CD8-positive, alpha-beta T cell (primary cell): ENCODE measurements at regions of chr7 and their contacts with region 1.

Region 1: DNA sequence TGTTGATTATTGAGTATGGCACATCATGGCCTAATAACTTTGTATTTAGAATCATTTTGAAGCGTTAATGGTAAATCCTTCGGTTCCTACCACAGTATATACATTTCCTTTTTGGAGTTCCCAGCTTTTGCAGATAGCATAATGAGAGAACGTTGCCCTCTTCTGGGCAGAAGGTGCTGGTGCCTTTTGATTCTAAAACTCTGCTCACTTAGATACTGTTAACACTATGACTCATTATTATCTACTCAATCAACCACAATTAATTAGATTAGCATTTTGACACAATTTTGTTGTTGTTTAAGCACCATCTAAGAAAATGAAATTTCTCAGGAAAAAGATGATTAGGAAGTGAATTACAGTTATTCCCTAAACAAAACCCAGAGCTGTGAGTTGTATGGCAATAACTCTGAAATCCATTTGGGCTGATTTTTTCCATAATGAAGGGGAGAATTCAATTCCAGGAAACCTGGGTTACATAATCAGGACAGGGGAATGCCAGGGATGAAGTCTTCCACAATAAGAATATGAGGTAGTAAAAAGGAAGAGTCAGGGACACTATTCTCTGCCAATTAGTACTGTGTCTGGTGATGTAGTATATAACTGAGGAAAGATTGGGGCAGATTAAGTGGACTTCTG is 11.5 kb upstream of the DLD start:
- DNase-seq: peak in 3 of 9 experiments; percentile 36 to 72 (median 66)
- ATAC-seq: peak; percentile 73
- H3K4me3 ChIP-seq: no peak overlapping the region
- H3K4me3 Mint-ChIP-seq: no peak overlapping the region
- H3K27ac ChIP-seq: no peak overlapping the region
- H3K27ac Mint-ChIP-seq: no peak overlapping the region
- H3K4me1 ChIP-seq: peaks cover 7% of the 10 kb centered on the region
- H3K4me1 Mint-ChIP-seq: peaks cover 18% of the 10 kb centered on the region
- H3K27me3 ChIP-seq: no peaks in the 10 kb centered on the region
- H3K27me3 Mint-ChIP-seq: peaks cover 12% of the 10 kb centered on the region
- CTCF ChIP-seq: peak; percentile 80

Region 2: GRCh38 chr7:106793015-106793975 is 1086.2 kb before region 1 on chr7:
- CTCF ChIA-PET with region 1: no interaction called
- POLR2A ChIA-PET with region 1: no interaction called
- intact Hi-C with region 1: loop called (anchors 5 to 10 kb)
- DNase-seq: peak in 6 of 9 experiments; percentile 16 to 75 (median 42)
- ATAC-seq: peak; percentile 82
- H3K4me3 ChIP-seq: no peak overlapping the region
- H3K4me3 Mint-ChIP-seq: no peak overlapping the region
- H3K27ac ChIP-seq: no peak overlapping the region
- H3K27ac Mint-ChIP-seq: no peak overlapping the region
- H3K4me1 ChIP-seq: no peaks in the 10 kb centered on the region
- H3K4me1 Mint-ChIP-seq: peaks cover 3% of the 10 kb centered on the region
- H3K27me3 ChIP-seq: no peaks in the 10 kb centered on the region
- H3K27me3 Mint-ChIP-seq: no peaks in the 10 kb centered on the region
- CTCF ChIP-seq: peak; percentile 88

Region 3: DNA sequence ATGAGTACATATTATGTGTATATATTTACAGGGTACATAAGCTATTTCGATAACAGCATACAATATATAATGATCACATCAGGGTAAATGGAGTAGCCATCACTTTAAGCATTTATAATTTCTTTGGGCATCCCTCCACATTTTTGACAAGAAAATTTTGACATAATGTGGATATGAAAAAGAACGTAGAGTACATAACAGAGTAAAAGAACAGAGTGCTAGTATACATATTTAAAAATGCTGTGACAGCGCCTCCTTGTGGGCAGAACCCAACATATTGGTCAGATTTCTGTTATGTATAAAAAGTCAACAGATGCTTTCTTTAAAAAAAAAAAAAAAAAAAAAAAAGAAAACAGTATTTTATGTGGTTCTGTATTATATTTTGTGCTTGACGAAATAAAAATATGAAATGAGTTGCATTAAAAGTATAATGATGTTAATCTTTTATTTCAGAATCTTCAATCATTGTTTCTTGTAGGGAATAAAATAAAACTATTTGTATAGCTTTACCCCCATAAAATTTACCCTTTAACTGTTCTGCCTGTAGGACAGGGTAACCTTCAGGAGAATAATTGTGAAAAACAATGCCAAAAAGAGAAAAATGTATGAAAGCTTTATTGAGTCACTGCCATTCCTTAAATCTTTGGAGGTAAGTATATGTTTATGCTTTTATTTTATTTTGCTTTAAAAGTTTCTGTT is 729.0 kb before region 1 on chr7:
- CTCF ChIA-PET with region 1: interaction called, 4 read pairs
- POLR2A ChIA-PET with region 1: no interaction called
- intact Hi-C with region 1: loop called (anchors 5 to 10 kb)
- DNase-seq: peak; percentile 64 to 86 (median 81)
- ATAC-seq: peak; percentile 88
- H3K4me3 ChIP-seq: no peak overlapping the region
- H3K4me3 Mint-ChIP-seq: no peak overlapping the region
- H3K27ac ChIP-seq: no peak overlapping the region
- H3K27ac Mint-ChIP-seq: no peak overlapping the region
- H3K4me1 ChIP-seq: no peaks in the 10 kb centered on the region
- H3K4me1 Mint-ChIP-seq: peaks cover 6% of the 10 kb centered on the region
- H3K27me3 ChIP-seq: no peaks in the 10 kb centered on the region
- H3K27me3 Mint-ChIP-seq: no peaks in the 10 kb centered on the region
- CTCF ChIP-seq: peak; percentile 95

Region 4: GRCh38 chr7:107462740-107463444 is 416.6 kb before region 1 on chr7:
- CTCF ChIA-PET with region 1: interaction called, 28 read pairs
- POLR2A ChIA-PET with region 1: no interaction called
- intact Hi-C with region 1: loop called (anchors 1 kb)
- DNase-seq: peak in 8 of 9 experiments; percentile 3 to 72 (median 44)
- ATAC-seq: peak; percentile 65
- H3K4me3 ChIP-seq: no peak overlapping the region
- H3K4me3 Mint-ChIP-seq: no peak overlapping the region
- H3K27ac ChIP-seq: no peak overlapping the region
- H3K27ac Mint-ChIP-seq: no peak overlapping the region
- H3K4me1 ChIP-seq: no peaks in the 10 kb centered on the region
- H3K4me1 Mint-ChIP-seq: no peaks in the 10 kb centered on the region
- H3K27me3 ChIP-seq: no peaks in the 10 kb centered on the region
- H3K27me3 Mint-ChIP-seq: no peaks in the 10 kb centered on the region
- CTCF ChIP-seq: peak; percentile 69

Region 5: GRCh38 chr7:107594961-107595737 is 284.4 kb before region 1 on chr7:
- CTCF ChIA-PET with region 1: interaction called, 3 read pairs
- POLR2A ChIA-PET with region 1: no interaction called
- intact Hi-C with region 1: loop called in 1 of 2 experiments (anchors 10 kb)
- DNase-seq: no peak
- ATAC-seq: no peak
- H3K4me3 ChIP-seq: no peak overlapping the region
- H3K4me3 Mint-ChIP-seq: no peak overlapping the region
- H3K27ac ChIP-seq: no peak overlapping the region
- H3K27ac Mint-ChIP-seq: no peak overlapping the region
- H3K4me1 ChIP-seq: no peaks in the 10 kb centered on the region
- H3K4me1 Mint-ChIP-seq: no peaks in the 10 kb centered on the region
- H3K27me3 ChIP-seq: no peaks in the 10 kb centered on the region
- H3K27me3 Mint-ChIP-seq: no peaks in the 10 kb centered on the region
- CTCF ChIP-seq: no peak

Region 6: GRCh38 chr7:107743567-107744344 is 135.8 kb before region 1 on chr7 and contains the start of gene CBLL1:
- CTCF ChIA-PET with region 1: interaction called, 157 read pairs
- POLR2A ChIA-PET with region 1: interaction called, 36 read pairs
- intact Hi-C with region 1: loop called (anchors 1 kb)
- DNase-seq: peak; percentile 96 to 99 (median 98)
- ATAC-seq: peak; percentile 91
- H3K4me3 ChIP-seq: peak within 1 kb of the TSS; percentile 90 to 99
- H3K4me3 Mint-ChIP-seq: peak within 1 kb of the TSS; percentile 92
- H3K27ac ChIP-seq: peak within 1 kb of the TSS; percentile 99
- H3K27ac Mint-ChIP-seq: peak within 1 kb of the TSS; percentile 100
- H3K4me1 ChIP-seq: peaks cover 46% of the 10 kb centered on the region
- H3K4me1 Mint-ChIP-seq: peaks cover 59% of the 10 kb centered on the region
- H3K27me3 ChIP-seq: no peaks in the 10 kb centered on the region
- H3K27me3 Mint-ChIP-seq: no peaks in the 10 kb centered on the region
- CTCF ChIP-seq: peak; percentile 68
- total RNA-seq, gene CBLL1: 68.5 to 71.6 TPM

Region 7: DNA sequence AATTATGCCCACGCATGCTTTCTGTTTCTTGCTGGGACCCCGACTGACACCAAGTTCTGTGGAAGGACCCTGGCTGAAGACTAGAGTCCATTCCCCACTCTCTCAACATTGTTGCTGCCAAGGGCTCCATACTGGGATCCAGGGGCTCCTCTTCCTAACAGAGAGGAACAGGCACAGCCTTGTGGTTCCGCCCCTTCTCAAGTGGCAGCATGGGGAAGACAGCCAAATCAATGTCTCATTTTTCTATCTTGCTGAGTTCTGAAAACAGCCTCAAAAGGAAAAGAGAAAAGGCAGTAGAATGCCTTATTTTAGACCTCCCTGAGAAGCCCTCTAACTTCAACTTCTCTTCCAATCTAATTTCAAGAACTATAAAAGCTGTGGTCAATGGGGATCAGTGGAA is 147.1 kb after region 1 on chr7:
- CTCF ChIA-PET with region 1: no interaction called
- POLR2A ChIA-PET with region 1: no interaction called
- intact Hi-C with region 1: no loop called
- DNase-seq: no peak
- ATAC-seq: no peak
- H3K4me3 ChIP-seq: no peak overlapping the region
- H3K4me3 Mint-ChIP-seq: no peak overlapping the region
- H3K27ac ChIP-seq: no peak overlapping the region
- H3K27ac Mint-ChIP-seq: no peak overlapping the region
- H3K4me1 ChIP-seq: no peaks in the 10 kb centered on the region
- H3K4me1 Mint-ChIP-seq: no peaks in the 10 kb centered on the region
- H3K27me3 ChIP-seq: no peaks in the 10 kb centered on the region
- H3K27me3 Mint-ChIP-seq: peaks cover 6% of the 10 kb centered on the region
- CTCF ChIP-seq: no peak

Region 8: DNA sequence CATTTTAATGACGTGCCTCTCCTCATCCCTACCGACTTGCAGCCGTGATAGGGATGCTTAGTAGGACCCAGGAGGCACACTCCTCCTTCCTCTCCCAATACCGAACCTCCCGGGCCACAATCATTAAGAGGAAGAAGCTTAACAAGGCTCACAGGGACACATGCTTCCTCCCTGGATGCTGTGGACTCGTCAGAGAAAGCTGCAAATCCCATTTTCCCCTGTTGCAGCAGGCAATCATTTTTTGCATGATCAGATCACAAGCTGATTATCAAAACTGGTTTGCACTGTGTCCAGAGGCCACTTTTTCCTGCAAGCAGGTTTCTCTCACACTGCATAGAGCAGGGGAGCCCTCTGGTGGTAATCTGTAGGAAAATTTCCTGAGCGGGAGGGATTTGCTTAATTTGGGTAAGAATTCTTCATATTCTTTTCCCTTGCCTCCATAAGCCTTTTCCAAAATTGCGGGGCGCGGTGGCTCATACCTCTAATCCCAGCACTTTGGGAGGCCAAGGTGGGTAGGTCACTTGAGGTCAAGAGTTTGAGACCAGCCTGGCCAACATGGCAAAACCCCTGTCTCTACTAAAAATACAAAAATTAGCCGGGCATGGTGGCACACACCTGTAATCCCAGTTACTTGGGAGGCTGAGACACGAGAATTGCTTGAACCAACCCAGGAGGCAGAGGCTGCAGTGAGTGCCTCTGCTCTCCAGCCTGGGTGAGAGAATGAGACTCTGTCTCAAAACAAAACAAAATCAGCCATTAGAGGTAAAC is 266.7 kb after region 1 on chr7:
- CTCF ChIA-PET with region 1: interaction called, 4 read pairs
- POLR2A ChIA-PET with region 1: no interaction called
- intact Hi-C with region 1: loop called in 1 of 2 experiments (anchors 5 kb)
- DNase-seq: peak in 6 of 9 experiments; percentile 13 to 60 (median 46)
- ATAC-seq: no peak
- H3K4me3 ChIP-seq: no peak overlapping the region
- H3K4me3 Mint-ChIP-seq: no peak overlapping the region
- H3K27ac ChIP-seq: no peak overlapping the region
- H3K27ac Mint-ChIP-seq: no peak overlapping the region
- H3K4me1 ChIP-seq: no peaks in the 10 kb centered on the region
- H3K4me1 Mint-ChIP-seq: no peaks in the 10 kb centered on the region
- H3K27me3 ChIP-seq: no peaks in the 10 kb centered on the region
- H3K27me3 Mint-ChIP-seq: no peaks in the 10 kb centered on the region
- CTCF ChIP-seq: peak; percentile 64